ENCODE measurements at regions of chr10 and their contacts with region 1.

Region 1: GRCh38 chr10:17617031-17617911 is at the start of gene HACD1:
- DNase-seq: peak; percentile 33 to 77
- ATAC-seq: peak; percentile 63 to 67
- H3K4me3 ChIP-seq: peak within 1 kb of the TSS; percentile 70 to 92 (median 84)
- H3K27ac ChIP-seq: peak within 1 kb of the TSS; percentile 94 to 98 (median 98)
- H3K4me1 ChIP-seq: peaks cover 0 to 5% of the 10 kb centered on the region in 2 donors
- H3K27me3 ChIP-seq: no peaks in the 10 kb centered on the region
- CTCF ChIP-seq: peak in 2 of 5 experiments; percentile 26 to 39
- POLR2A ChIP-seq: peak; percentile 78 to 84
- total RNA-seq, gene HACD1: 16.5 to 73.4 (median 44.3) TPM

Region 2: DNA sequence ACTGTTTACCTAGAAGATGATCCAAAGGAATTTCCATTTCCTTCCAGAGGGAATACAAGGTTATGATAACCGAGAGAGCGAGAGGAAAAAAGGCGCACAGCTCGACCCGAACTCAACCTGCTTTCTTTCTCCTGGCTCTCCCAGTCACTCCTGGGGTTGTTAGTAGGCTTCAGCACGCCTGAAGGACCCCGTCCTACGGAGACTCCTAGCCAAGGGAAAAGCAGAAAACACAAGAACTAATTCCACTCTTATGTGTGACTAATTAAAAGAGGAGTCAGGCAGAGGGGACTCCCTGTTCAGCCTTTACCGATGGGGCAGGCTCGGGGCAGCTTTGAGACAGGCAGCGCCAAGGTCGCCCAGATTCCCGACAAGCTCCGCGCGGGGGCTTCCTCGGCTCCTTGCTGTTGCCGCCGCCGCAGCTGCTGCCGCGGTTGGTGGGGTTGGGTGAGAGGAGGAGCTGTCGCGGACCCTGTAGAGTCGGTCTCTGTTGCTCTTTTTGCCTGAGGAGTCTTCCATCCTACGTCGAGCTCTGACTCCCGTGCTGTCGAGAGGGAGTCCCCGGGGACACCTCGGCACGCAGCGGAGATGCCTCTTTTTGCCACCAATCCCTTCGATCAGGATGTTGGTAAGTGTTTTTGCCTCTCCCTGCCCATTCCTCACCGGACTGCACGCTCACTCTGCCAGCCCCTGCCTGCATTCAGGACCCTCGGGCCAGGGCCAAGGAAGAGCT is 26.6 kb after region 1 on chr10 and contains the start of gene STAM:
- in situ Hi-C with region 1: no loop called
- intact Hi-C with region 1: loop called (anchors 1 kb)
- DNase-seq: peak; percentile 84 to 90
- ATAC-seq: peak; percentile 83 to 91
- H3K4me3 ChIP-seq: peak within 1 kb of the TSS; percentile 72 to 97 (median 93)
- H3K27ac ChIP-seq: peak within 1 kb of the TSS; percentile 83 to 99 (median 97)
- H3K4me1 ChIP-seq: peaks cover 38 to 43% of the 10 kb centered on the region in 2 donors
- H3K27me3 ChIP-seq: no peaks in the 10 kb centered on the region
- CTCF ChIP-seq: no peak
- POLR2A ChIP-seq: peak; percentile 88 to 91
- total RNA-seq, gene STAM: 28.6 to 52.0 (median 35.2) TPM

Region 3: GRCh38 chr10:17673456-17674061 is 56.3 kb after region 1 on chr10:
- in situ Hi-C with region 1: no loop called
- intact Hi-C with region 1: loop called (anchors 2 kb)
- DNase-seq: peak; percentile 27 to 73
- ATAC-seq: peak; percentile 68 to 70
- H3K4me3 ChIP-seq: no peak overlapping the region
- H3K27ac ChIP-seq: peak overlapping the region; percentile 81 to 88 (median 86)
- H3K4me1 ChIP-seq: peaks cover 71 to 85% of the 10 kb centered on the region in 2 donors
- H3K27me3 ChIP-seq: no peaks in the 10 kb centered on the region
- CTCF ChIP-seq: no peak
- POLR2A ChIP-seq: peak in 1 of 2 donors; percentile 33

Region 4: GRCh38 chr10:17737027-17737965 is 120.0 kb after region 1 on chr10:
- in situ Hi-C with region 1: no loop called
- intact Hi-C with region 1: loop called (anchors 2 kb)
- DNase-seq: peak in 1 of 2 donors; percentile 70
- ATAC-seq: peak in 1 of 2 donors; percentile 32
- H3K4me3 ChIP-seq: no peak overlapping the region
- H3K27ac ChIP-seq: no peak overlapping the region
- H3K4me1 ChIP-seq: peaks cover 13 to 17% of the 10 kb centered on the region in 2 donors
- H3K27me3 ChIP-seq: no peaks in the 10 kb centered on the region
- CTCF ChIP-seq: peak in 4 of 5 experiments; percentile 38 to 72 (median 56)
- POLR2A ChIP-seq: no peak

Region 5: DNA sequence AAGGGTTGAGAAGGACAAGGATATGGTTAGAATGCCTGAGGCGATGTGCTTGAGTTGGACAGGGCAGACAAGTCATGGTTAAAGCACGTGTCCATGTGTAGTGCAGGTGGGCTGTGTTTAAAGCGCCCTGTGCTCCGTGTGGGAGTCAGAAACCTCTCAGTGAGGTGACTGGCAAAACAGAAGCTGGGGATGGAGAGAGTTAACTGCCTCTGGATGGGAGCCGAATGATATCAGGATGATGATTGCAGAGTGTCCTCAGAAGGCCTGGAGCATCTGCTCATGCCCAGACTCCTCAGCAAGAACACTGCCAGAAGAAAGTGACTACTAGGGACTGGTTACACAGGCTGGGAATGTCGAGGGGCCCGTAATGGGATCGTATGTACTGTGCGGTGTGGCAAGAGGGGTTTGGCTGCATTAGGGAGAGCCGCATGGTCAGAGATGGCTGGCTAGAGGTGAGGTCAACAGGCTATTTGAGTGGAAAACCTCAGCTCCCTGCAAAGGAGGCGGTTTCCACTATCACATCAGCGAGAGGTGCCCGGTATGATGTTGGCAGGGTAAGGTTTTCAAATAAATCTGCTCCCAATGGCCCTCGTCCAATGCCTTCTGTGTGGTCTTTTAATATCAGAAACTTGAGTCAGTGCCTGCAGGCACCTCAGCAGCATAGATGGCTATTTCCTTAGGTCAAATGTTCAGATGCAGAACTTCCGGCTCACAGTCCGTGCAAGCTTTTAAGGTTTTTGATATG is 165.8 kb after region 1 on chr10:
- in situ Hi-C with region 1: no loop called
- intact Hi-C with region 1: loop called (anchors 2 kb)
- DNase-seq: peak; percentile 21 to 82
- ATAC-seq: peak; percentile 65 to 89
- H3K4me3 ChIP-seq: peak overlapping the region in 3 of 4 donors; percentile 9 to 30 (median 19)
- H3K27ac ChIP-seq: peak overlapping the region; percentile 51 to 82 (median 75)
- H3K4me1 ChIP-seq: peaks cover 23 to 45% of the 10 kb centered on the region in 2 donors
- H3K27me3 ChIP-seq: no peaks in the 10 kb centered on the region
- CTCF ChIP-seq: no peak
- POLR2A ChIP-seq: no peak

Region 6: GRCh38 chr10:18104223-18104872 is 487.1 kb after region 1 on chr10:
- in situ Hi-C with region 1: loop called in 1 of 4 experiments (anchors 25 kb)
- intact Hi-C with region 1: no loop called
- DNase-seq: peak in 1 of 2 donors; percentile 5
- ATAC-seq: no peak
- H3K4me3 ChIP-seq: no peak overlapping the region
- H3K27ac ChIP-seq: no peak overlapping the region
- H3K4me1 ChIP-seq: no peaks in the 10 kb centered on the region
- H3K27me3 ChIP-seq: no peaks in the 10 kb centered on the region
- CTCF ChIP-seq: peak in 2 of 5 experiments; percentile 35 to 39
- POLR2A ChIP-seq: no peak

Region 7: DNA sequence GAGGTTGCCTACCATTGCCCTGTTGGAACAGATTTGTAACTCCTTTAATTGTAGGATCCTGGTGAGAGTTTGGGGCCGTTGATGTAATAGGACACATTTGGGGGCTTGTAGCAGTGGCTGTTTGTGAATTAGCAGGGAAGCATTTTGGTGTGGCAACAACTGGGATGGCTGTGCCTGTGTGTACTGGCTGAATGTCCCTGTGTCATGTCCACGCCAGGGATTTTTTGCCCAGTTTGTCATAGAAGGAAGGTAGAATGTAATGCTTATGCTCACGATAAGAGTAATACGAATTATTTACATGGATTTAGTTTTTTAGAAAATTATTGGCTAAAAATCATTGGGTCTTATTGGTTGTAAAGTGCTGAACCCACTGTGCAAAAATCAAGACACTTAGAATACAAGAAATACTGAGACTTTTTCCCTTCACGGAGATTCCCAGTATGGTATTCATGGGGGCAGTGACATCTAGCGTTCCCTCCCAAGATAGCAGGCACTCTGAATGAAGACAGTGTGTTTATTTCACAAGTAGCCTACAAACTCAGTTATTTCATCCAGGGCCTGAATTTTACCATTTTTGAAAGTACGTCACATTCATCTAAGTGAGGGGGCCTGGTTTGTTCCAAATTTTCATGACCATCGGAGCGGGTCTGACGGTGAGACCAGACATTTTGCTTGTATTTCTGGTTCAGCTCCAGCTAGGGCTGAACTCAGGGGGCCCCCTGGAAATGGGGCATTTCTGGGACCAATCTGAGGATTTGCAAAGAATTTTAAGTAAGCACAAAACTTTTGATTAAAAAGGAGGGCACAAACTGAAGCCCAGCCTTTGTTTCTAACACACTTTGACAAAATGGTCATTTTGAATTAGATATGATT is 597.7 kb after region 1 on chr10:
- in situ Hi-C with region 1: loop called in 1 of 4 experiments (anchors 25 kb)
- intact Hi-C with region 1: no loop called
- DNase-seq: no peak
- ATAC-seq: peak in 1 of 2 donors; percentile 70
- H3K4me3 ChIP-seq: peak overlapping the region in 1 of 4 donors; percentile 21
- H3K27ac ChIP-seq: no peak overlapping the region
- H3K4me1 ChIP-seq: no peaks in the 10 kb centered on the region
- H3K27me3 ChIP-seq: no peaks in the 10 kb centered on the region
- CTCF ChIP-seq: peak in 4 of 5 experiments; percentile 43 to 71 (median 59)
- POLR2A ChIP-seq: no peak